CD4-positive, alpha-beta T cell (primary cell): ENCODE measurements at regions of chr20 and their contacts with region 1.

Region 1: DNA sequence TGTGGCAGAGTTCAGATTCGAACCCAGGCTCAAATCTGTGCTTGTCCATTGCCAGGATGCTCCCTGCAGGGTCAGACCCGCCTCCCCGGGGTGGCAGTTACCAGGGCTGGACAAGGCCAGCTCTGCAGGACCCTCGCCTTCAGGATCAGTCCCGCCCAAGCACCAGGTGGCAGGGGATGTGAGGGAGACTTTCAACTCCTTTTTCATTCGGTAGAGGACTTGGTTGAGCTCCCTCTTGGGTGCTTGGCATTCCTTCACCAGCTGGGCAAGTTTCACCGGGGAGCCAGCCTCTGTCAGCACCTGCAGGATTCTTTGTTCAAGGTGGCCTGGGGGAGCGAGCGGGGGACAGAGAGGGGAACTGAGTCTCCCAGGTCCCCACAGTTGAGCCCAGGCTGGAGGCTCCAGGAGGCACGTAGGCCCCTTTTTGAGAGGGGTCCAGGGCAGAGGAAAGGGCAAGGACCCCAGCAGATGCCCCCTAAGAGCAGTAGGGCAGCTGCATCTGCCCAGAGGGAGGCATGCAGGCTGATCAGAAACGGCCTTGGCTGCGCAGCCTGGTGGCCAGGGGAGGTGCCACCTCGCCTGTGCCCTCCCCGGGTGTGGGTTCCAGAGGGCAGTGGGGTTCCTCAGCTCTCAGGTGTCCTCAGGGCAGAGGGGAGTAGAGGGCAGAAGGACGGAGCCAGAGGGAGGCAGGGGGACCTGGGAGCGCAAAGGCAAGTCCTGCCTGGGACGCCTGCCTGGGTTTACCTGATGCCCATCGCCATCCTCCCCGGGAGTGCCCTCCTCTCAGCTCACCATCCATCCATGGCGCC is 3.9 kb downstream of the ZBP1 start:
- DNase-seq: no peak
- ATAC-seq: no peak
- H3K4me3 ChIP-seq: no peak overlapping the region
- H3K4me3 Mint-ChIP-seq: no peak overlapping the region
- H3K27ac ChIP-seq: no peak overlapping the region
- H3K27ac Mint-ChIP-seq: peak overlapping the region; percentile 94
- H3K4me1 ChIP-seq: peaks cover 62% of the 10 kb centered on the region
- H3K4me1 Mint-ChIP-seq: peaks cover 50% of the 10 kb centered on the region
- H3K27me3 ChIP-seq: no peaks in the 10 kb centered on the region
- H3K27me3 Mint-ChIP-seq: no peaks in the 10 kb centered on the region
- CTCF ChIP-seq: no peak

Region 2: GRCh38 chr20:57570145-57570850 is 46.0 kb before region 1 on chr20:
- CTCF ChIA-PET with region 1: no interaction called
- POLR2A ChIA-PET with region 1: no interaction called
- intact Hi-C with region 1: no loop called
- DNase-seq: no peak
- ATAC-seq: no peak
- H3K4me3 ChIP-seq: no peak overlapping the region
- H3K4me3 Mint-ChIP-seq: no peak overlapping the region
- H3K27ac ChIP-seq: no peak overlapping the region
- H3K27ac Mint-ChIP-seq: no peak overlapping the region
- H3K4me1 ChIP-seq: no peaks in the 10 kb centered on the region
- H3K4me1 Mint-ChIP-seq: no peaks in the 10 kb centered on the region
- H3K27me3 ChIP-seq: peaks cover 4 to 12% of the 10 kb centered on the region in 2 experiments
- H3K27me3 Mint-ChIP-seq: peaks cover 60% of the 10 kb centered on the region
- CTCF ChIP-seq: no peak

Region 3: DNA sequence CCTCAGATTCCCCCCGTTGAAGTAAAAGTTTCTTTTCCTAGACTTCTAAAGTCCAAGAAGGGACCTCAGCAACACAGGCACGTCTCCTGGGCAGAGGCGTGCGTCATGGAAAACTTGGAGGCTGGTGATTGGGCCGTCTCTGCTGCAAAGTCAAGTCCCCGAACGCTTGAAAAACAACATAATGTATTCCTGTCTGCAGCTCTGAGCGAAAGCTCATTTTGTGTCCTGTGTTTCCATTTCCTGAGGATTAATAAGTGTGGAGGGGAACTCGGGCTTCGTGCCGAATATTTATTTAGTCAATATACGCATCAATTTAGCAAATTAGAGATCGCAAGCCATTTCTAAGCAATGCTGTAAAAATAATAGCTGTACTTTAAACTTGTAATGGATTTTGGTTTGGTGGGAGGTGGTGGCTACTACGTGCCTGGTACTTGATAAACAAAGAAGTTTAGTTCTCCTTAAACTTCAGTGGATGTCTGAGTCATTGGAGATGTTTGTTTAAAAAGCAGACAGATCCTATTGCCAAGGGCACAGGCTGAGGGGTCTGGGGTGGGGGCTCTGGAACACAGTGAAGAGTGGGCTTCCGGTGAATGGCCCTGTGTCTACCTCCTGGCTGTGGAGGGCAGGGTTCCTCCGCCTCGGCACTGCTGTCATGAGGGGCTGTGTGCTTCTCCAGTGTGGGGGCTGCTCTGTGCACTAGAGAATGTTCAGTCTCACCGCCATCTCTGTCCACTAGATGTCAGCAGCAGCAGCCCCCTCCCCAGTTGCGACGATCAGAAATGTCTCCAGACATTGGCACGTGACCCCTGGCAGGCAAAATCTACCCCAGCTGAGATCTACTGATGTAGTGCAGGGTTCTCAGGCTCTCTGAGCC is 33.7 kb before region 1 on chr20:
- CTCF ChIA-PET with region 1: no interaction called
- POLR2A ChIA-PET with region 1: no interaction called
- intact Hi-C with region 1: no loop called
- DNase-seq: no peak
- ATAC-seq: no peak
- H3K4me3 ChIP-seq: no peak overlapping the region
- H3K4me3 Mint-ChIP-seq: no peak overlapping the region
- H3K27ac ChIP-seq: no peak overlapping the region
- H3K27ac Mint-ChIP-seq: no peak overlapping the region
- H3K4me1 ChIP-seq: peaks cover 3% of the 10 kb centered on the region
- H3K4me1 Mint-ChIP-seq: no peaks in the 10 kb centered on the region
- H3K27me3 ChIP-seq: peaks cover 16% of the 10 kb centered on the region in 2 experiments
- H3K27me3 Mint-ChIP-seq: peaks cover 80% of the 10 kb centered on the region
- CTCF ChIP-seq: no peak

Region 4: DNA sequence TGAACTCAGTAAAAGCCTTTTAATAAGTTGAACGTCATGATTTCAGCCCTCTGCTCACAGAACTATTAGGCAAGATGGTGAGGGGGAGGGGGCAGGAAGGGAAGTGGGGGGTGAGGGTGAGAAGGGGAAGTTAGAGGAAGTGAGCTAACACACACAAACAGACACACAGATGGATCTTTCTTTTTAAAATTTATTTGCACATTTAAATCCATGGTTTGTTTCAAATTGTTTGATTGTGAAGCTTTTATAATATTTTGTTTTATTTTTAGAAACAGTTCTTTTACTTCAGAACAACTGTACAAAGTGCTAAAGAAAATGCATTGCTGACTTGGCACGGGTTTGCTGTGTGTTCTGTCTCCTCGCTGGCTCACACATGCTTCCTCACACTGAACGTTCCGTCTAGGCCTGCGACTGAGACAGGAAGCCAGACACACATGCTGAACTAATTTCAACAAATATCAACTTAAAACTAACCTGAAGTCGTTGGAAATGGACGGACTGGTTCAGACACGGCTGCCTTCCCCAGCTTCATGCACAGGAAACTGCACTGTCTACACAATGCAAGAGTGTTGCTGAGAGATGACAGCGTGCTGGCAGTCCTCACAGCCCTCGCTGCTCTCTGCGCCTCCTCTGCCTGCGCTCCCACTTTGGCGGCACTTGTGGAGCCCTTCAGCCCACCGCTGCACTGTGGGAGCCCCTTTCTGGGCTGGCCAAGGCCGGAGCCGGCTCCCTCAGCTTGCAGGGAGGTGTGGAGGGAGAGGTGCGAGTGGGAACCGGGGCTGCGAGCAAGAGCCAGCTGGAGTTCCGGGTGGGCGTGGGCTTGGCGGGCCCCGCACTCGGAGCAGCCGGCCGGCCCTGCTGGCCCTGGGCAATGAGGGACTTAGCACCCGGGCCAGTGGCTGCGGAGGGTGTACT is 12.0 kb after region 1 on chr20:
- CTCF ChIA-PET with region 1: interaction called, 12 read pairs
- POLR2A ChIA-PET with region 1: interaction called, 139 read pairs
- intact Hi-C with region 1: loop called in 1 of 2 experiments (anchors 1 kb)
- DNase-seq: peak in 13 of 14 experiments; percentile 43 to 88 (median 62)
- ATAC-seq: peak; percentile 79
- H3K4me3 ChIP-seq: peak overlapping the region; percentile 40
- H3K4me3 Mint-ChIP-seq: peak overlapping the region; percentile 83
- H3K27ac ChIP-seq: peak overlapping the region; percentile 80 to 88
- H3K27ac Mint-ChIP-seq: peak overlapping the region; percentile 94
- H3K4me1 ChIP-seq: peaks cover 43% of the 10 kb centered on the region
- H3K4me1 Mint-ChIP-seq: peaks cover 90% of the 10 kb centered on the region
- H3K27me3 ChIP-seq: no peaks in the 10 kb centered on the region
- H3K27me3 Mint-ChIP-seq: no peaks in the 10 kb centered on the region
- CTCF ChIP-seq: no peak